ENCODE measurements at regions of chr7 and their contacts with region 1.

Region 1: DNA sequence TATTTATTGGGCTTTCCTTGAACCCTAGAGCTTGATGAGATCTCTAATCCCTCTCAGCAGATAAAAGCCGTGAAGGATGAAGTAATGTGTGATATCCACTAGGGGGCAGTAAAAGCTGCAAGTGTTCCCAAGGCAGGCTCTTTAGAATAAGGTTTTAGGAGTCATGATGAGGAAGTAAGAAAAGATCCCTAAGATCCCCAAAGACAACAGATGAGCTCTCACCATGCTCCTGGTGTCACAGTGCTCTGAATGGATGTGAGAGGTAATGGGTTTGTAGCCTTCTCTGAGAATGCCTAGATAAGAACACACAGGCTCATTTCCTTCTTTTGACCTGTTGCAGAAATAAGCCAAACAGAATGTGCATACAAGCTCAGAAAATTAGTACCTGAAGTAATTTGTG is 70.4 kb upstream of the ITPRID1 start:
- DNase-seq: no peak
- ATAC-seq: peak; percentile 89
- H3K4me3 Mint-ChIP-seq: no peak overlapping the region
- H3K27ac Mint-ChIP-seq: no peak overlapping the region
- H3K4me1 Mint-ChIP-seq: peaks cover 38% of the 10 kb centered on the region
- H3K27me3 Mint-ChIP-seq: peaks cover 22% of the 10 kb centered on the region
- CTCF ChIP-seq: peak; percentile 78

Region 2: GRCh38 chr7:31134246-31135188 is 308.9 kb before region 1 on chr7:
- CTCF ChIA-PET with region 1: interaction called, 21 read pairs
- POLR2A ChIA-PET with region 1: no interaction called
- DNase-seq: peak; percentile 80
- ATAC-seq: peak; percentile 99
- H3K4me3 Mint-ChIP-seq: peak overlapping the region; percentile 9
- H3K27ac Mint-ChIP-seq: no peak overlapping the region
- H3K4me1 Mint-ChIP-seq: peaks cover 5% of the 10 kb centered on the region
- H3K27me3 Mint-ChIP-seq: peaks cover 7% of the 10 kb centered on the region
- CTCF ChIP-seq: peak; percentile 77

Region 3: GRCh38 chr7:31302356-31302755 is 141.1 kb before region 1 on chr7:
- CTCF ChIA-PET with region 1: no interaction called
- POLR2A ChIA-PET with region 1: no interaction called
- DNase-seq: no peak
- ATAC-seq: no peak
- H3K4me3 Mint-ChIP-seq: no peak overlapping the region
- H3K27ac Mint-ChIP-seq: no peak overlapping the region
- H3K4me1 Mint-ChIP-seq: peaks cover 9% of the 10 kb centered on the region
- H3K27me3 Mint-ChIP-seq: no peaks in the 10 kb centered on the region; the same call in 1 of the 2 replicates
- CTCF ChIP-seq: no peak

Region 4: DNA sequence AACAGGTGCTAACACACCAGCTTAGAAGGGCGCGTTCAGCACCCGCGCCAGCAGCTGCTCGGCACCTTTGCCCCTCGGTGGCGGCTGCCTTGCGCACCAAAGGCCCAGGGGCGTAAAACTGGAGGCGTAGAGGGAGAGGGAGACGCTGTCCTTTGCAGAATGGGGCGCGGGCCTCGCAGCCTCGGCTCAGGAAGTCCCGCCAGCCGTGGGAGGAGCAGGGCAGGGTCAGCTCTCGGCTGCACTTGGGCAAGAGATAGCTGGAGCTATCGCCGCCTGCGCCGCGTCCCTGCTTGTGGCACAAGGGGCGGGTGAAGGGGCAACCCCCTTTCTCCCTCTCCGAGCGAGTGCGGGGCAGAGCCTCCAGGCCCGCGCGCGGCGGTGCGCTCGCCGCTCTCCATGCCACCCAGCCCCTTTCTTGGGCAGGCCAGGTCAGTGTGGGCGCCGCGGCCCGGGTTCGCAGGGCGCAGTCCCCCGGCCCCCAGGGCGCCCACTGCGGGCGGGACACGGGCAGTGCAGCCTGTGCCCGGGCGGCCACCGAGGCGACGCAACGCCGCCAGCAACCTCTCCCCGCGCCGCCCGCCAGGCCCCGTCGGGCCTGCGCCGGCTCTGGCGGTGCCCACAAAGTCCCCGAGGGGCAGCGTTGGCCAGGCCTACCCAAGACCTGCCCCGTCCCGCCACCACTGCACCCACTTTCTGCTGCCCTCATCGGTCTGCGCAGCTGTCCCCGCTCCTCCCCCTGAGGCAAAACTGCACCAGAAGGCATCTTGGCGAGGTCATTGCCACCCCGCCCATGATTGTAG is 107.1 kb before region 1 on chr7:
- CTCF ChIA-PET with region 1: interaction called, 10 read pairs
- POLR2A ChIA-PET with region 1: no interaction called
- DNase-seq: peak; percentile 66
- ATAC-seq: peak; percentile 87
- H3K4me3 Mint-ChIP-seq: peak overlapping the region; percentile 74
- H3K27ac Mint-ChIP-seq: no peak overlapping the region
- H3K4me1 Mint-ChIP-seq: 0 out of 2 replicates have a peak, but pooled peaks cover 2% of the 10 kb centered on the region
- H3K27me3 Mint-ChIP-seq: peaks cover 62% of the 10 kb centered on the region
- CTCF ChIP-seq: peak; percentile 69

Region 5: DNA sequence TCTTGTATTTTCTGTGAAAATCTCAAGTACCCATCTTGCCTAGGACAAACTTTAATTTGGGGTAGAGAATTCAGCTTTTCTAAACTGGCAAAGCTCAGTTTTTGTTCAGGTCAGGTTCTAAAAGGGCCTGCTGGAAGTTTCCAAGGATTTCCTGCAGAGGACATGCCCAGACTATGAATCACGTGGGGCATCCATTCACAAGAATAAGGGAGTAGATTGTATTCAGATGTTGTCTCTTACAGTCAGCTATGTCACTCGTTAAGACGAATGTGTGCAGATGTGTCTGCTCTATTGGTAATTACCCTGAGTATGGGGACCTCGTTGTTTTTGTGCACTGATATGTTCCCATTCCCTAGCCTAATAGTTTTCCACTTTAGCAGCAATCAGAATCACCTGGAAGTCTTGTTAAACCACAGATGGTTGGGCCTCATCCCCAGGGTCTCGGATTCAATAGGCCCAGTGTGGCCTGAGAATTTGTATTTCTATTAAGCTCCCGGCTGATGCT is 10.6 kb before region 1 on chr7:
- CTCF ChIA-PET with region 1: interaction called, 16 read pairs
- POLR2A ChIA-PET with region 1: no interaction called
- DNase-seq: no peak
- ATAC-seq: no peak
- H3K4me3 Mint-ChIP-seq: no peak overlapping the region
- H3K27ac Mint-ChIP-seq: no peak overlapping the region
- H3K4me1 Mint-ChIP-seq: peaks cover 15% of the 10 kb centered on the region
- H3K27me3 Mint-ChIP-seq: no peaks in the 10 kb centered on the region
- CTCF ChIP-seq: no peak

Region 6: GRCh38 chr7:31466036-31466435 is 22.6 kb after region 1 on chr7:
- CTCF ChIA-PET with region 1: interaction called, 28 read pairs
- POLR2A ChIA-PET with region 1: no interaction called
- DNase-seq: no peak
- ATAC-seq: peak; percentile 91
- H3K4me3 Mint-ChIP-seq: peak overlapping the region; percentile 32
- H3K27ac Mint-ChIP-seq: peak overlapping the region; percentile 73
- H3K4me1 Mint-ChIP-seq: peaks cover 77% of the 10 kb centered on the region
- H3K27me3 Mint-ChIP-seq: peaks cover 86% of the 10 kb centered on the region
- CTCF ChIP-seq: no peak

Region 7: GRCh38 chr7:31488562-31489203 is 45.2 kb after region 1 on chr7:
- CTCF ChIA-PET with region 1: interaction called, 51 read pairs
- POLR2A ChIA-PET with region 1: no interaction called
- DNase-seq: peak; percentile 85
- ATAC-seq: peak; percentile 97
- H3K4me3 Mint-ChIP-seq: no peak overlapping the region
- H3K27ac Mint-ChIP-seq: no peak overlapping the region
- H3K4me1 Mint-ChIP-seq: peaks cover 38% of the 10 kb centered on the region
- H3K27me3 Mint-ChIP-seq: peaks cover 7% of the 10 kb centered on the region; the same call in 1 of the 2 replicates
- CTCF ChIP-seq: peak; percentile 95

Region 8: DNA sequence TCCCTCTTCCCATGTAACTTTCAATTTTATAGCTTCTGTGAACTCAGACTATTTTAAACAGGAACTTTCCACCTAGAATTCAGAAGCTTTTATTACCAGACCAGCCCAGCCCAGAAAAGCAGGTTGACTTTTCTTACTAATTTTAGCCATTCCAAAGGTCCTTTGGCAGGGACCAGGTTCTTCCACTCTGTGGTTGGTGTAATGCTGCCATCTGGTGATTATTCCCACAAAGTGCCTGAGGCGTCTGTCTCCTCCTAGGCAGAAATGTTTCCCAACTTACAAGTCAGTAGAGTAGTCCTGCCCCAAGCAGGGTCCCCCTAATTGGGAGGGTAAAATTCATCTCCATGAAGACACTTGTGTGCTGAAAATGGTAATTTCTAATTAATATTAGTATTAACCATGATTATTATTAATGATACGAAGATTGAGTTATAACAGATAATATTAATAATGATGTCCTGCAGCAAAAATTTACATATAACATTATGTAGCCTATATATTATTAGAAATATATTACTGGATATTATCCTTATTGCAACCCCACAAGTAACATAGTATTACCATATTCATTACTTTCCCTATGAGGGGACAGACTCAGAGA is 190.5 kb after region 1 on chr7:
- CTCF ChIA-PET with region 1: interaction called, 72 read pairs
- POLR2A ChIA-PET with region 1: interaction called, 4 read pairs
- DNase-seq: peak; percentile 67
- ATAC-seq: peak; percentile 95
- H3K4me3 Mint-ChIP-seq: no peak overlapping the region
- H3K27ac Mint-ChIP-seq: no peak overlapping the region
- H3K4me1 Mint-ChIP-seq: peaks cover 5% of the 10 kb centered on the region
- H3K27me3 Mint-ChIP-seq: peaks cover 3% of the 10 kb centered on the region; the same call in 1 of the 2 replicates
- CTCF ChIP-seq: peak; percentile 41